Psoas muscle (tissue), 8 donors: ENCODE measurements at regions of chr2 and their contacts with region 1.

Region 1: GRCh38 chr2:23524261-23524706 is 139.3 kb downstream of the KLHL29 start:
- DNase-seq: peak; percentile 88 to 95
- ATAC-seq: peak; percentile 87 to 92 (median 90)
- H3K4me3 ChIP-seq: peak overlapping the region; percentile 64
- H3K27ac ChIP-seq: peak overlapping the region; percentile 99
- H3K4me1 ChIP-seq: peaks cover 34% of the 10 kb centered on the region
- H3K27me3 ChIP-seq: no peaks in the 10 kb centered on the region
- CTCF ChIP-seq: no peak

Region 2: DNA sequence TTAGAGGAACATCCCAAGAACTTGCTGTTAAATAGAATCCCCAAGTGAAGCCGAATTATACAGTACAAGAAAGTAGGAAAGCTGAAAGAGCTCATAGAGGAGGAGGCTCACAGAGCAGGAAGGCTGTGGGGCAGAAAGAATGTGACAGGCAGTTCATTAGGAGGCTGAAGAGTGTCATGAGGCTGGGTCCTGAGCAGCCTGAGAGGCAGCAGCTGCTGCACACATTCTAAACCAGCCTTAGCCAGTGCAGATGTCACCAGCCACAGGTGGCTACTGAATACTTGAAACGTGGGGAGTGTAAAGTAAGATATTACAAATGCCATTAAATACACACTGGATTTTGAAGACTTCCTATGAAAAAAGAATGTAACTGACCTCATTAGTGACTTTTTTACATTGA is 629.5 kb before region 1 on chr2:
- intact Hi-C with region 1: no loop called
- DNase-seq: no peak
- ATAC-seq: no peak
- H3K4me3 ChIP-seq: no peak overlapping the region
- H3K27ac ChIP-seq: no peak overlapping the region
- H3K4me1 ChIP-seq: no peaks in the 10 kb centered on the region
- H3K27me3 ChIP-seq: no peaks in the 10 kb centered on the region
- CTCF ChIP-seq: no peak

Region 3: DNA sequence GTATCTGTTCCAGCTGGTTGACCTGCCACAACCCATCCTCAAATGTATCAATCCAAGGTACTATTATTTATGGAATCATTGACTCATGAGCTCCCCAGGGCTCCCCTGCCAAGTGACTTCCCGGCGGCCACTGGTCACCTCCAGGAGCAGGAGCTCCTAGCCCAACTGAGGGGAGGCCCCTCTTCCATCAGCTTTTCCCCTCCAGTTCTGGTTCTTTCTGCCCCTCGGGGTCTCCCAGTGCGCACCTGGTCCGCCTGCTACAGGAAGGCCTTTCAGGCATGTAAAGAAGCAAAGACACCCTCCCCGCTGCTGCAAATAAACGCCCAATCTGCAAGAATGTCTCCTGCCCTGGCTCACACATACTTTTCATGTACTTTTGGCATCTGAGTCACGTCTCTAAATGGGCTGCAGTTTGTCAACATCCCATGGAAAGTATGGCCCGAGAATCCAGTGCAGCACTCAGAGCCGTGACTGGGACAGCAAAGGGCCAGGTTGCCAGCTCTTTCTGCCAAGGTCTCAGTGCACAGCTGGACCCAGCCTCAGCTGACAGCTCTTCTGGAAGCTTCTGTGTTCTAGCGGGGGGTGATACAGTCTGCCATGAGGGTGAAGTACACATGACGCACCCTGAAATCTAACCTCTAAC is 97.9 kb before region 1 on chr2:
- intact Hi-C with region 1: loop called in 1 of 2 experiments (anchors 5 kb)
- DNase-seq: peak; percentile 83 to 93
- ATAC-seq: peak; percentile 81 to 87 (median 85)
- H3K4me3 ChIP-seq: no peak overlapping the region
- H3K27ac ChIP-seq: peak overlapping the region; percentile 88
- H3K4me1 ChIP-seq: peaks cover 36% of the 10 kb centered on the region
- H3K27me3 ChIP-seq: no peaks in the 10 kb centered on the region
- CTCF ChIP-seq: no peak

Region 4: GRCh38 chr2:23505218-23505983 is 18.9 kb before region 1 on chr2:
- intact Hi-C with region 1: no loop called
- DNase-seq: no peak
- ATAC-seq: peak in 1 of 4 donors; percentile 26
- H3K4me3 ChIP-seq: no peak overlapping the region
- H3K27ac ChIP-seq: no peak overlapping the region
- H3K4me1 ChIP-seq: no peaks in the 10 kb centered on the region
- H3K27me3 ChIP-seq: no peaks in the 10 kb centered on the region
- CTCF ChIP-seq: no peak

Region 5: GRCh38 chr2:23563673-23564619 is 39.7 kb after region 1 on chr2:
- intact Hi-C with region 1: loop called (anchors 1 to 5 kb)
- DNase-seq: peak; percentile 76 to 92
- ATAC-seq: peak; percentile 79 to 86 (median 82)
- H3K4me3 ChIP-seq: no peak overlapping the region
- H3K27ac ChIP-seq: peak overlapping the region; percentile 90
- H3K4me1 ChIP-seq: peaks cover 48% of the 10 kb centered on the region
- H3K27me3 ChIP-seq: no peaks in the 10 kb centered on the region
- CTCF ChIP-seq: peak; percentile 9

Region 6: DNA sequence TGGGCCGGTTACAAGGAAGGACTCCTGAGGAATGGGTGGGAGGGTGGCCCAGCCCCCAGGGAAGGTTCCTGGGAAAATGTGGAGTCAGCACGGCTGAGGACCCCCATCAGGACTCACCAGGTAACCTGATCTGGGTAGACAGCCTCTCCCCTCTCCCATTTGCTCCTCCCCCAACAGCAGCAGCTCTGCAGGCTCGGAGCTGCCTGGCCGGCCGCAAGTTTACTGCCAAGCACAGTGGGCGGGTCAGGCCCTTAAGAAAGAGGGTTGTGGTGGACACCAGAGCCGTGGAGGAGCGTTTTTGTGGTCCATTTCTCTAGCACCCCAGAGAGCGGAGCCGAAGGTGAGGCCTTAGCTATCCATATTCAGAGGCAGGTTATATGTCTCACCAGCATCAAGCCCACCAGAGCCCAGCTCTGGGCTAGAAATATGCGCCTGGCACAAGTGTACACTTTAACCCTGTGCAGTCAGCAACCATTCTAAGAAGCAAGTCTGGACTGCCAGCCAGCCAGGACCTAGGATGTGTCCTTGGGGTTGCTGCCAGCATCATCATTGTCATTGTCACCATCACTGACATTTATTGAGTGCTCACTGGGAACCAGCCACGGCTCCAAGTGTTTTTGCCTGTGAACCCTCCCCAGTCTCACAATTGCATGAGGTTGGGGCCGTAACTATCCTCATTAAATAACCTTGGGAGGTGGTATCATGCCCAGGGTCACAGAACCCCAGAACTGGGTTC is 50.8 kb after region 1 on chr2:
- intact Hi-C with region 1: no loop called
- DNase-seq: peak in 1 of 2 donors; percentile 45
- ATAC-seq: no peak
- H3K4me3 ChIP-seq: no peak overlapping the region
- H3K27ac ChIP-seq: no peak overlapping the region
- H3K4me1 ChIP-seq: no peaks in the 10 kb centered on the region
- H3K27me3 ChIP-seq: no peaks in the 10 kb centered on the region
- CTCF ChIP-seq: no peak

Region 7: DNA sequence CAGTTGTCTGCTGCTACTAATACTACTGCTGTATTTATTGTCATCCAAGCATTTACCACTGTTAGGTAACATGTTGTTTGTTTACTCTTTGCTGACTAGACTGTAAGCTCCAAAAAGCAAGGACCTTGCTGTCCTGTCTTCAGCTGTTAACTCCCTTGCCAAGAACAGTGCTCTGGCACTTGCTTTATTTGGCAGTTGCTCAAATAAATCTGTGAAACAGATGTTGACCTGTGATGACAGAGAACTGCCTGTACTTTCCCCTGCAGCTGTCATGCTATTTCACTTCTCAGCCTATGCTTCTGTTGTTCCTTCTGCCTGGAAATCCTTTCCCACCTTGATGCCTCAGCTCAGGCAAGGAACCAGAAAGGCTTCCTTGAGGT is 221.4 kb after region 1 on chr2:
- intact Hi-C with region 1: loop called (anchors 5 to 10 kb)
- DNase-seq: no peak
- ATAC-seq: peak; percentile 94 to 96 (median 96)
- H3K4me3 ChIP-seq: no peak overlapping the region
- H3K27ac ChIP-seq: peak overlapping the region; percentile 83
- H3K4me1 ChIP-seq: peaks cover 18% of the 10 kb centered on the region
- H3K27me3 ChIP-seq: no peaks in the 10 kb centered on the region
- CTCF ChIP-seq: no peak

Region 8: DNA sequence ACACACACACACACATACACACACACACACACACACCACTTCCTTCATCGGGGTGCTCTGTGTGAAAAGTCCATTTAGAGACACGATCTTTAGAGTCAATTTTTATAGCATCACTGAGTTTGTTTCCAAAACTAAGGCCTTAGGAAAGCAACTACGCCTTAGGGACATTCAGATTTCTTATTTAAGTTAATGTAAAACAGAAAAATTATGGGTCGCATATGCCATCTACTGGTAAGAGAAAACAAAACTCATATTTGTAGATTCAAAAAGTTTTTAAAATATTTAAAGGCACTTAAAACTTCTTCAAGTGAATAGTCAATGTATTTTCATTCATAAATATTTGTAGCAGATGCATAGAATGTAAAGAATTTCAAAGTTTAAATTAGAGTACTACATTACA is 236.5 kb after region 1 on chr2:
- intact Hi-C with region 1: loop called in 1 of 2 experiments (anchors 10 kb)
- DNase-seq: no peak
- ATAC-seq: peak in 3 of 4 donors; percentile 27 to 63 (median 37)
- H3K4me3 ChIP-seq: no peak overlapping the region
- H3K27ac ChIP-seq: no peak overlapping the region
- H3K4me1 ChIP-seq: peaks cover 25% of the 10 kb centered on the region
- H3K27me3 ChIP-seq: no peaks in the 10 kb centered on the region
- CTCF ChIP-seq: peak; percentile 51